ENCODE measurements at regions of chr5 and their contacts with region 1.

Region 1: DNA sequence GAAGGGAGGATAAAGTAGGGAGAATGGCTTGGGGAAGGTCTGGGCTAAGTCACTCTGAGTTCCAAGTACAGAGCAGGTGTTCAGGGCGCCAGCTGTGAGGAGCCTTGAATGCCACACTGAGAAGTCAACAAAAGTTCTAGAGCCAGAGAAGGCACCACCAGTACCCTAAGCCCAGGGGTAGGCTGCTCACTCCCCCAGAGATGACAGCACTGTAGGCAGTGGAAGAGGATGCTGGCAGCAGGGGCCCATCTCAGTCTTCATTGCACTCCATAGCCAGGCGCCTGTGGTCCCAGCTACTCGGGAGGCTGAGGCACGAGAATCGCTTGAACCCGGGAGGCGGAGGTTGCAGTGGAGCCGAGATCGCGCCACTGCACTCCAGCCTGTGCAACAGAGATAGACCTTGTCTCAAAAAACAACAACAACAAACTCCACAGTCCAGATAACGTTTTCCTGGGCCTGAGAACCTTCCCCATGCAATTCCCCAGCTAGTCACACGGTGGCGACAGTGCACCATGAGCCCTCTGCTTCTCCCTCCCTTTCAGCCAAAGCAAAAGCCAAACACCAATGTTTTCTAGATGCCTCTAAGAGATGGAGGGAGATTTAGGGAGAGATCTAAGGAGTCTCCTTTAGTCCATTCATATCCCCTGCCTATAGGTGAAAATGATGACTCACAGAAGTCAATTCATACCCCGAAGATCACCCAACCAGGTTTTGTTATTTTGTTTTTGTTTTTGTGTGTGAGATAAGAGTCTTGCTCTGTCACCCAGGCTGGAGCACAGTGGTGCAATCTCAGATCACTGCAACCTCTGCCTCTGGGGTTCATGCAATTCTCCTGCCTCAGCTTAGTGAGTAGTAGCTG is 19.8 kb upstream of the NSD1 start:
- DNase-seq: peak; percentile 86
- ATAC-seq: peak; percentile 65
- H3K4me3 ChIP-seq: no peak overlapping the region
- H3K4me3 Mint-ChIP-seq: no peak overlapping the region
- H3K27ac ChIP-seq: no peak overlapping the region
- H3K27ac Mint-ChIP-seq: peak overlapping the region; percentile 46
- H3K4me1 ChIP-seq: peaks cover 10 to 21% of the 10 kb centered on the region in 2 donors
- H3K4me1 Mint-ChIP-seq: peaks cover 18% of the 10 kb centered on the region
- H3K27me3 ChIP-seq: no peaks in the 10 kb centered on the region
- H3K27me3 Mint-ChIP-seq: no peaks in the 10 kb centered on the region
- CTCF ChIP-seq: peak; percentile 98

Region 2: DNA sequence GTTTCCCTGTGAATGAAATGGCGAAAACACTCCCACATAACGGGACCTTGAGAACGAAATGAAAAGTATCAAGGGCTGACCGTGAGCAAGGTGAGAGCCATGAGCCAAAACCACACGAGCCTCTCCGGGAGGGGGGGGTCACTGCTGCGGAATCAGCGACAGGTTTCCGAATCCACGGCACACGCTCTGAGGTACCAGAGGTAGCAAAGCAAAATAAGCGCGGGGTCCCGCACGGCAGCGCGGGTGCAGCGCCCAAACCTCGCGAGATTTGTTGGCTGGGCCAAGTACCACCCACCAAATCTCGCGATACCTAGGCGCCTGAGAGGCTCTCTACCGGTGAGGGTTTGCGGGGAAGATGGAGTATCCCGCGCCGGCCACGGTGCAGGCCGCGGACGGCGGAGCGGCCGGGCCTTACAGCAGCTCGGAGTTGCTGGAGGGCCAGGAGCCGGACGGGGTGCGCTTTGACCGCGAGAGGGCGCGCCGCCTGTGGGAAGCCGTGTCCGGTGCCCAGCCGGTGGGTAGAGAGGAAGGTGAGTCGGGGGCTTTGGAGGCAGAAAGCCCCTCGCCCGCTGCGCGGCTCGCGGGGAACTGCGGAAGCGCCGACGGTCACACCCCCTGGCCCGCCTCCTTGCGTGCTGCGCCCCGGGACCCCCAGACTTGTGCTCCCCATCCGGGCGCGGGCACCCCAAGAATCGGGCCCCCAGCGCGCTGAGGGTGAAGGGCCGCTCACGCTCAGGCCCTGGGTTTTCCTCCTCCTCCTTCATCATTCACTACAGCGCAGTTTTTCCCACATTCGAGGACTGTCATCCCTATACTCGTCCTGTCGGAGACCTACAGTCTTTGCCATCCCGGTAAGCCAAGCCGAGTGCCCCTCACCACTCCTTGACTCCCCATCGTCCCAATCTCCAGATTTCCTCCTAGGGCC is 91.1 kb before region 1 on chr5 and contains the start of gene ZNF346:
- CTCF ChIA-PET with region 1: interaction called, 5 read pairs
- POLR2A ChIA-PET with region 1: no interaction called
- intact Hi-C with region 1: loop called (anchors 2 kb)
- DNase-seq: peak; percentile 95
- ATAC-seq: peak; percentile 98
- H3K4me3 ChIP-seq: peak within 1 kb of the TSS; percentile 69 to 96 (median 96)
- H3K4me3 Mint-ChIP-seq: peak within 1 kb of the TSS; percentile 98
- H3K27ac ChIP-seq: peak within 1 kb of the TSS; percentile 66 to 92
- H3K27ac Mint-ChIP-seq: peak within 1 kb of the TSS; percentile 96
- H3K4me1 ChIP-seq: peaks cover 15 to 17% of the 10 kb centered on the region in 2 donors
- H3K4me1 Mint-ChIP-seq: peaks cover 38% of the 10 kb centered on the region
- H3K27me3 ChIP-seq: no peaks in the 10 kb centered on the region
- H3K27me3 Mint-ChIP-seq: no peaks in the 10 kb centered on the region
- CTCF ChIP-seq: peak; percentile 44
- total RNA-seq, gene ZNF346: 38.4 and 47.1 TPM in 2 replicates

Region 3: GRCh38 chr5:177049285-177049684 is 64.5 kb before region 1 on chr5:
- CTCF ChIA-PET with region 1: no interaction called
- POLR2A ChIA-PET with region 1: no interaction called
- intact Hi-C with region 1: no loop called
- DNase-seq: no peak
- ATAC-seq: no peak
- H3K4me3 ChIP-seq: no peak overlapping the region
- H3K4me3 Mint-ChIP-seq: no peak overlapping the region
- H3K27ac ChIP-seq: no peak overlapping the region
- H3K27ac Mint-ChIP-seq: no peak overlapping the region
- H3K4me1 ChIP-seq: no peaks in the 10 kb centered on the region
- H3K4me1 Mint-ChIP-seq: no peaks in the 10 kb centered on the region
- H3K27me3 ChIP-seq: no peaks in the 10 kb centered on the region
- H3K27me3 Mint-ChIP-seq: no peaks in the 10 kb centered on the region
- CTCF ChIP-seq: no peak

Region 4: DNA sequence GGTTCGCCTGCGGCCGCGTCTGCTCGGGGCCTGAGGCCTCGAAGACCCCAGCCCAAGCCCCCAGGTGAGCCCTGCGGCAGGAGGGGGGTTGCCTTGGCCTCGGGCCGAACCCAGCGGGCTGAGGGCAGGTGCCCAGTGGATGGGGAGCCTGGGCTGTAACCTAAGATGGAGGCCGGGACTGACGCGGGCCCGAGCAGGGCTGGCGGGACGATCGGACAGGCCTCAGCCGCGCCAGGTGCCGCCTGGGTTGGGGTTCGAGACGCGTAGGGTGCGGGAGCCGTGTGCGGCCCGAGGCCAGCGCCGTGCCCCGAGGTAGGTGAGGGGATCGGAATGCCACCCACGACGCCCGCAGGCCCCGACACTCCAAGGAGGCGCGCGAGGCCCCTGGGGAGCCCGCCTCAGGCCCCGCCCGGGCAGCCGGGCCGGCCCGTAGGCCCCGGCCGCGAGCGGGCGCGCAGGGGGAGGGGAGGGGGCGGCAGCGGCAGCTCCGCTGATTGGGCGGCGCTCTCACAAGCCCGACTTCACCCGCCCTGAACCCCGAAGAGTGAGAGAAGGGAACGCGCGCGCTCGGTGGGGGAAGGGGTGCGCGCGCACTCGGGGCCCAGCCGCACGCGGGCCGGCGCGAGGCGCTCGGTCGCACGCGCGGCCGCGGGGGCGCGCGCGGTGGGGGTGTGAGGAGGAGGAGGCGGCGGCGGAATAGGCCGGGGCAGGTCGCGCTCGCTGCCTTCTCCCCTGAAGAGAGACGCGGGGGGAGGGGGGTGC is 19.5 kb after region 1 on chr5 and contains the start of gene NSD1:
- CTCF ChIA-PET with region 1: interaction called, 89 read pairs
- POLR2A ChIA-PET with region 1: interaction called, 3 read pairs
- intact Hi-C with region 1: loop called (anchors 1 kb)
- DNase-seq: peak; percentile 97
- ATAC-seq: peak; percentile 79
- H3K4me3 ChIP-seq: peak within 1 kb of the TSS; percentile 65 to 80 (median 74)
- H3K4me3 Mint-ChIP-seq: peak within 1 kb of the TSS; percentile 86
- H3K27ac ChIP-seq: peak within 1 kb of the TSS; percentile 91 to 92
- H3K27ac Mint-ChIP-seq: peak within 1 kb of the TSS; percentile 96
- H3K4me1 ChIP-seq: peaks cover 33 to 50% of the 10 kb centered on the region in 2 donors
- H3K4me1 Mint-ChIP-seq: peaks cover 45% of the 10 kb centered on the region
- H3K27me3 ChIP-seq: no peaks in the 10 kb centered on the region
- H3K27me3 Mint-ChIP-seq: no peaks in the 10 kb centered on the region
- CTCF ChIP-seq: no peak
- total RNA-seq, gene NSD1: 145 and 152 TPM in 2 replicates

Region 5: GRCh38 chr5:177232761-177233160 is 119.0 kb after region 1 on chr5:
- CTCF ChIA-PET with region 1: interaction called, 38 read pairs
- POLR2A ChIA-PET with region 1: no interaction called
- intact Hi-C with region 1: no loop called
- DNase-seq: no peak
- ATAC-seq: no peak
- H3K4me3 ChIP-seq: no peak overlapping the region
- H3K4me3 Mint-ChIP-seq: no peak overlapping the region
- H3K27ac ChIP-seq: no peak overlapping the region
- H3K27ac Mint-ChIP-seq: no peak overlapping the region
- H3K4me1 ChIP-seq: no peaks in the 10 kb centered on the region
- H3K4me1 Mint-ChIP-seq: peaks cover 8% of the 10 kb centered on the region
- H3K27me3 ChIP-seq: no peaks in the 10 kb centered on the region
- H3K27me3 Mint-ChIP-seq: no peaks in the 10 kb centered on the region
- CTCF ChIP-seq: no peak

Region 6: GRCh38 chr5:177303121-177303924 is 189.5 kb after region 1 on chr5 and contains the starts of genes PRELID1 and RAB24:
- CTCF ChIA-PET with region 1: interaction called, 5 read pairs
- POLR2A ChIA-PET with region 1: no interaction called
- intact Hi-C with region 1: loop called (anchors 5 kb)
- DNase-seq: peak; percentile 91
- ATAC-seq: peak; percentile 59
- H3K4me3 ChIP-seq: peak within 1 kb of the TSS; percentile 71 to 97 (median 91)
- H3K4me3 Mint-ChIP-seq: peak within 1 kb of the TSS; percentile 95
- H3K27ac ChIP-seq: peak within 1 kb of the TSS; percentile 45 to 81
- H3K27ac Mint-ChIP-seq: peak within 1 kb of the TSS; percentile 93
- H3K4me1 ChIP-seq: peaks cover 60 to 79% of the 10 kb centered on the region in 2 donors
- H3K4me1 Mint-ChIP-seq: peaks cover 76% of the 10 kb centered on the region
- H3K27me3 ChIP-seq: no peaks in the 10 kb centered on the region
- H3K27me3 Mint-ChIP-seq: no peaks in the 10 kb centered on the region
- CTCF ChIP-seq: peak; percentile 64
- total RNA-seq, gene PRELID1: 66.5 and 71.7 TPM in 2 replicates
- total RNA-seq, gene RAB24: 38.3 and 39.7 TPM in 2 replicates

Region 7: GRCh38 chr5:177357459-177358351 is 243.9 kb after region 1 on chr5 and contains the start of gene RGS14:
- CTCF ChIA-PET with region 1: no interaction called
- POLR2A ChIA-PET with region 1: no interaction called
- intact Hi-C with region 1: no loop called
- DNase-seq: peak; percentile 90
- ATAC-seq: peak; percentile 88
- H3K4me3 ChIP-seq: peak within 1 kb of the TSS; percentile 74 to 96 (median 92)
- H3K4me3 Mint-ChIP-seq: peak within 1 kb of the TSS; percentile 87
- H3K27ac ChIP-seq: peak within 1 kb of the TSS; percentile 62 to 80
- H3K27ac Mint-ChIP-seq: peak within 1 kb of the TSS; percentile 95
- H3K4me1 ChIP-seq: peaks cover 56 to 63% of the 10 kb centered on the region in 2 donors
- H3K4me1 Mint-ChIP-seq: peaks cover 76% of the 10 kb centered on the region
- H3K27me3 ChIP-seq: no peaks in the 10 kb centered on the region
- H3K27me3 Mint-ChIP-seq: no peaks in the 10 kb centered on the region
- CTCF ChIP-seq: no peak
- total RNA-seq, gene RGS14: 85.8 and 92.6 TPM in 2 replicates

Region 8: GRCh38 chr5:177403792-177404640 is 290.2 kb after region 1 on chr5:
- CTCF ChIA-PET with region 1: interaction called, 15 read pairs
- POLR2A ChIA-PET with region 1: no interaction called
- intact Hi-C with region 1: loop called (anchors 10 kb)
- DNase-seq: peak; percentile 91
- ATAC-seq: peak; percentile 82
- H3K4me3 ChIP-seq: peak overlapping the region; percentile 14 to 68 (median 61)
- H3K4me3 Mint-ChIP-seq: peak overlapping the region; percentile 84
- H3K27ac ChIP-seq: peak overlapping the region in 1 of 2 donors; percentile 48
- H3K27ac Mint-ChIP-seq: peak overlapping the region; percentile 32
- H3K4me1 ChIP-seq: peaks cover 38 to 50% of the 10 kb centered on the region in 2 donors
- H3K4me1 Mint-ChIP-seq: peaks cover 39% of the 10 kb centered on the region
- H3K27me3 ChIP-seq: peaks cover 0 to 37% (median 9%) of the 10 kb centered on the region in 4 experiments
- H3K27me3 Mint-ChIP-seq: peaks cover 14% of the 10 kb centered on the region
- CTCF ChIP-seq: peak; percentile 70

Region 9: GRCh38 chr5:178590141-178590923 is 1476.5 kb after region 1 on chr5 and contains the start of gene COL23A1:
- CTCF ChIA-PET with region 1: no interaction called
- POLR2A ChIA-PET with region 1: no interaction called
- intact Hi-C with region 1: no loop called
- DNase-seq: peak; percentile 49
- ATAC-seq: peak; percentile 77
- H3K4me3 ChIP-seq: peak within 1 kb of the TSS in 4 of 5 experiments; percentile 23 to 48 (median 36)
- H3K4me3 Mint-ChIP-seq: peak within 1 kb of the TSS; percentile 79
- H3K27ac ChIP-seq: no peak within 1 kb of the TSS
- H3K27ac Mint-ChIP-seq: no peak within 1 kb of the TSS
- H3K4me1 ChIP-seq: peaks cover 8 to 14% of the 10 kb centered on the region in 2 donors
- H3K4me1 Mint-ChIP-seq: peaks cover 10% of the 10 kb centered on the region
- H3K27me3 ChIP-seq: peaks cover 0 to 45% (median 12%) of the 10 kb centered on the region in 4 experiments
- H3K27me3 Mint-ChIP-seq: peaks cover 44% of the 10 kb centered on the region
- CTCF ChIP-seq: peak; percentile 43
- total RNA-seq, gene COL23A1: 0.10 and 0.20 TPM in 2 replicates

Measured in B cell (primary cell).